SK-N-SH (cell line): ENCODE measurements at regions of chr7 and their contacts with region 1.

Region 1: DNA sequence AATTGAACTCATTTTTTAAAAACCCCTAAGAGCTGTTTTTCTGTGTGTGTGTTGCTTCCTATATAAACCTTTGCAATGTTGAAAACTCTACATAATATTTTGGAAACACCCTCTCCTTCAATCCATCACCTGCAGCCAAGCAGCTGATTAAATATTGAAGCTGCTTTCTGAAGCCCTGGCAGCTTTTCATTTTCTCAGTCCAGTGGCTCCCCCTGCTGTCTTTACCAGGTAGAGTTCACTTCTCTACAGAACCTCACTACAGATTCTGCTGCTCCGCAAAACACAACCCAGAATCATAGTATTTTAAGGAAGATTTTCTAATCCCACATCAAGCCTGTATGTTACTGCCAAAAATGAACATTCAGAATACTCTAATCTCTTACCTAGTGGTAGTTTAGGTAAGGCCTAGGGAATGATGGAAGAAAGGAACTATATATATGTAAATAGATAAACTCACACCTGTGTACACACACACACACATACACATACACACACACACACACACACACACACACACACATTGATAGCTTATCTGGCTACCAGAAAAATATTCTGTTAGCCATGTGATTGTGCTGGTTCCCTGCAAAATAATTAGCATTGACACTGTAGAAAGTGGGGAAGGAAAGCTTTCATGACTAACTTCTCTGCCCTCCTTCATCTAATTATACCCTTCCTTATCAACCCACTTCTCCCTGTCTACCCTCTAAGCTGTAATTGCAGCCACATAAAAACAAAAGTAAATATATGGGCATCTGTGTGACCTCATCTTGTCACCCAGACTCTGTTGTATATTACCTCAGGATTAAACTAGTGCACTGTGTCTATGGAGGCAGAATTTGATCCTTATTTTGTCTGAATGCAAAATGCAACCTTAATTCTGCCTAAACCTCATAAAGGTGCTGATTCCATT is 229.5 kb upstream of the FZD1 start:
- DNase-seq: peak; percentile 76
- H3K4me3 ChIP-seq: no peak overlapping the region; a peak in 1 of 4 replicates
- H3K27ac ChIP-seq: peak overlapping the region; percentile 5 to 17; a peak in 2 of 4 replicates
- H3K4me1 ChIP-seq: peaks cover 0 to 6% of the 10 kb centered on the region in 2 experiments; a peak in 2 of 4 replicates
- H3K27me3 ChIP-seq: no peaks in the 10 kb centered on the region
- CTCF ChIP-seq: peak; percentile 96
- EP300 ChIP-seq: peak in 1 of 2 experiments; percentile 54; a peak in 2 of 4 replicates
- RAD21 ChIP-seq: peak; percentile 96

Region 2: DNA sequence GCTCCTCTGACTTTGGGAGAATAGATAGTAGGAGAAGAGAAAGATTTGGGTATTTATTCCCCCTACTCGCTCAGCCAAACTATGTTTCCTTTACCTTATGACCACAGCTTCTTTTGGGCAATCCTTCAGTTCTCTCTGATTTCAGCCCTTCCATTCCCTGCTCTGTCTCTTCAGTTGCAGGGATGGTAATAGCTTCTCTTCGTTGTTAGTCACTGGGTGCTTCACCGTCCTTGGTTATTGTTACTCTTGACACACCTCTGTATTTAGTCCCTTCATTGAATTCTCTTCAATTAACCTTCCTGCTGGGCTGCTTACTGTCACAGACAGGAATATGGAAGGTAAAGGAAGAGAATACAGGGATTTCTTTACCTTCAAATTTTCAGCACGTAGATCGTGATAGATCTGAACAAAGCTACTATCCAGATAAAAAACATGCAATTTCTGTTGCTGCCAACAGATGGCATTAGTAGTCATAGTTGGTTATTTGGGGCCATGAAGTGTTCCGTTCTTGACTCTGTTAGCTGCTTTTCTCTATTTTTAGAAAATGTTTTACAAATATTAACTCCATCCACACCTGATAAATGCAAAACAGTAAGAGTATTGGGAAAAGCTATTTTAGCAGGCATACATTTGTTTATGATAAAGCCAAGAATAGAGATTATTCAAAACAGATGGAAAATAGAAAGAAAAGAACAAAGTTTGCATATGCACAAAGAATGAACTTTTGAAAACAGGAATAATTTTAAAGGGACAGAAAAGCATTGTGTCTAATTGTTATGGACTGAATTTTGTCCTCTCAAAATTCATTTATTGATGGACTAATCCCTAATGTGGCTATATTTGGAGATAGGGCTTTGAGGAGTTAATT is 579.3 kb before region 1 on chr7:
- CTCF ChIA-PET with region 1: interaction called, 100 read pairs
- POLR2A ChIA-PET with region 1: interaction called, 5 read pairs
- DNase-seq: peak; percentile 61
- H3K4me3 ChIP-seq: peak overlapping the region; percentile 9 to 15; a peak in 1 of 4 replicates
- H3K27ac ChIP-seq: no peak overlapping the region
- H3K4me1 ChIP-seq: peaks cover 0 to 2% of the 10 kb centered on the region in 2 experiments; a peak in 1 of 4 replicates
- H3K27me3 ChIP-seq: no peaks in the 10 kb centered on the region
- CTCF ChIP-seq: peak; percentile 98
- EP300 ChIP-seq: no peak
- RAD21 ChIP-seq: peak; percentile 89

Region 3: GRCh38 chr7:90595801-90596671 is 438.7 kb before region 1 on chr7 and contains the start of gene CDK14:
- CTCF ChIA-PET with region 1: interaction called, 26 read pairs
- POLR2A ChIA-PET with region 1: no interaction called
- DNase-seq: peak; percentile 96
- H3K4me3 ChIP-seq: peak within 1 kb of the TSS; percentile 96 to 99
- H3K27ac ChIP-seq: peak within 1 kb of the TSS; percentile 81 to 85
- H3K4me1 ChIP-seq: peaks cover 21 to 32% of the 10 kb centered on the region in 2 experiments
- H3K27me3 ChIP-seq: no peaks in the 10 kb centered on the region
- CTCF ChIP-seq: peak; percentile 48
- EP300 ChIP-seq: peak in 1 of 2 experiments; percentile 44; a peak in 1 of 4 replicates
- RAD21 ChIP-seq: no peak
- polyA plus RNA-seq, gene CDK14: 13.9 and 15.6 TPM in 2 replicates

Region 4: GRCh38 chr7:90629297-90629918 is 405.3 kb before region 1 on chr7:
- CTCF ChIA-PET with region 1: interaction called, 32 read pairs
- POLR2A ChIA-PET with region 1: no interaction called
- DNase-seq: peak; percentile 68
- H3K4me3 ChIP-seq: no peak overlapping the region
- H3K27ac ChIP-seq: no peak overlapping the region
- H3K4me1 ChIP-seq: peaks cover 11 to 18% of the 10 kb centered on the region in 2 experiments
- H3K27me3 ChIP-seq: no peaks in the 10 kb centered on the region
- CTCF ChIP-seq: peak; percentile 84
- EP300 ChIP-seq: no peak
- RAD21 ChIP-seq: peak; percentile 94

Region 5: DNA sequence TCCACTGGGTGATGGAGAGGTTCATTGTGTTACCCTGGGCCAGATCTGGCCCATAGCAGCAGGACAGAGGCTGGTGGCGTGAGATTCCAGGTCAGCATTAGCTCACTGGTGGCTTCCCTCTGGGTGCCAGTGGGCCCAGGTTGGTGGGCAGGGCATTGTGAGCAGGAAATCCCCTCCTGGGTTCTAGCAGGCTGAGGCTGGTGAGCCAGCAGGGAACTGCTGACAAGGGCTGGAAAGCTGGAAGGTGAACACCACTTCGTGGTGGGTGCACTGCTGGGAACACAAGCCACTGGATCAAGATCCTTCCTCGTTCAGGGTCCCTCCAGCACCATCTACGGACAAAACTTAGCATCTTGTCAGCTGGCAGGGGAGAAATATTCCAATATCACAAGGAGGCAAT is 29.7 kb before region 1 on chr7:
- CTCF ChIA-PET with region 1: interaction called, 13 read pairs
- POLR2A ChIA-PET with region 1: no interaction called
- DNase-seq: no peak
- H3K4me3 ChIP-seq: no peak overlapping the region
- H3K27ac ChIP-seq: no peak overlapping the region
- H3K4me1 ChIP-seq: peaks cover 4 to 6% of the 10 kb centered on the region in 2 experiments
- H3K27me3 ChIP-seq: no peaks in the 10 kb centered on the region
- CTCF ChIP-seq: no peak
- EP300 ChIP-seq: no peak
- RAD21 ChIP-seq: no peak

Region 6: DNA sequence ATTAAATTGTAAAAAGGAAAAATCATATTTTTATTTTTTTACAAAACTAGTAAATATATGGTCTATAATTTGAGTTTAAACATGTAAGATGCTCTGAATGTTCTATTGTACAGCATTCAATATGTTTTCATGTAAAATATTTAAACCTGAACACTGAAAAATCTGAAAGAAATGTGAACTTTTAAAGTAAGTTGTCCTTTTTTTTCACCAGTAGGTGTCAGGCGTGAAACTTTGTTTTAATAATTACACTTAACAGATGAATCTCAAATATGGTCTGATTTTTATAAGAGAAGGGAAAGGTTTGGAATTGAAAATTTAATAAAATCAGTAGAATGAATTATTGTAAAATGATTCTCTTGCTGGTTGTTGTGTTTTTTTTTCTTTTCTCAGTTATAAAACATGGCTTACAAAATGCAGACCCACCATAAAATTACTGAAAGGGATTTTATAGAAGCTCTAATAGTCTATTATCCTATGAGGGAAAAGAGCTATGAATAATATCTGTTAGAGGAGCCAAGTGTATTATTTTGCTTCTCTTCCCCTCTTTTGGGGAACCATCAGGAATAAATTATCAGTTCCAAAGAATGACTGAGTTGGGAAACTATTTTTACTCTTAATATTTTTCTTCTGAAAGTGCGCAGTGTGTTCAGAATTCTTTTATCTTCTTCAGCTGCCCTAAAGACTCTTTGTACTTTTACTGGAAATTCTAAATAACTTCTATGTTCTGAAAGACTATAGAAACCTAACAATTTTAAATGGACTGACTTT is 11.8 kb after region 1 on chr7:
- CTCF ChIA-PET with region 1: interaction called, 21 read pairs
- POLR2A ChIA-PET with region 1: no interaction called
- DNase-seq: no peak
- H3K4me3 ChIP-seq: no peak overlapping the region
- H3K27ac ChIP-seq: peak overlapping the region in 1 of 2 experiments; percentile 16; a peak in 1 of 4 replicates
- H3K4me1 ChIP-seq: no peaks in the 10 kb centered on the region; a peak in 1 of 4 replicates
- H3K27me3 ChIP-seq: no peaks in the 10 kb centered on the region
- CTCF ChIP-seq: peak; percentile 60
- EP300 ChIP-seq: no peak
- RAD21 ChIP-seq: peak; percentile 48

Region 7: GRCh38 chr7:91098566-91098965 is 63.9 kb after region 1 on chr7:
- CTCF ChIA-PET with region 1: no interaction called
- POLR2A ChIA-PET with region 1: no interaction called
- DNase-seq: no peak
- H3K4me3 ChIP-seq: no peak overlapping the region
- H3K27ac ChIP-seq: no peak overlapping the region
- H3K4me1 ChIP-seq: peaks cover 0 to 15% of the 10 kb centered on the region in 2 experiments; a peak in 2 of 4 replicates
- H3K27me3 ChIP-seq: no peaks in the 10 kb centered on the region
- CTCF ChIP-seq: no peak
- EP300 ChIP-seq: no peak
- RAD21 ChIP-seq: no peak